ENCODE measurements at regions of chr1 and their contacts with region 1.

Region 1: GRCh38 chr1:38873027-38873969 is at the start of gene MYCBP:
- DNase-seq: peak; percentile 91 to 99 (median 97)

Region 2: DNA sequence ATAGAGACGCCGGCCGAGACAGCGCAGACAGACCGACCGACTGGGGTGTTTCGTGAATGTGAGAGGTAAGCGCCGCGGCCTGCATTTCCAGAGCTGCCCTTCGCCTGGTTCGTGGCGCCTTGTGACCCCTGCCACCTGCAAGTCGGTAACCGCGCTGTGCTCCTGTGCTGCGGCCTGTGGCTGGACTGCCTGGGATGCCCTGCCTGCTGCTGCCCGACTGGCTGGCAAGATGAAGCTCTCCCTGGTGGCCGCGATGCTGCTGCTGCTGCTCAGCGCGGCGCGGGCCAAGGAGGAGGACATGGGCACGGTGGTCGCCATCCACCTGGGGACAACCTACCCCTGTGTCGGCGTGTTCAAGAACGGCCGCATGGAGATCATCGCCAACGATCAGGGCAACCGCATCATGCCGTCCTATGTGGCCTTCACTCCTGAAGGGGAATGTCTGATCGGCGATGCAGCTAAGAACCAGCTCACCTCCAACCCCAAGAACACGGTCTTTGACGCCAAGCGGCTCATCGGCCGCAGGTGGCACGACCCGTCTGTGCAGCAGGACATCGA is 164.5 kb before region 1 on chr1:
- intact Hi-C with region 1: no loop called
- DNase-seq: no peak

Region 3: DNA sequence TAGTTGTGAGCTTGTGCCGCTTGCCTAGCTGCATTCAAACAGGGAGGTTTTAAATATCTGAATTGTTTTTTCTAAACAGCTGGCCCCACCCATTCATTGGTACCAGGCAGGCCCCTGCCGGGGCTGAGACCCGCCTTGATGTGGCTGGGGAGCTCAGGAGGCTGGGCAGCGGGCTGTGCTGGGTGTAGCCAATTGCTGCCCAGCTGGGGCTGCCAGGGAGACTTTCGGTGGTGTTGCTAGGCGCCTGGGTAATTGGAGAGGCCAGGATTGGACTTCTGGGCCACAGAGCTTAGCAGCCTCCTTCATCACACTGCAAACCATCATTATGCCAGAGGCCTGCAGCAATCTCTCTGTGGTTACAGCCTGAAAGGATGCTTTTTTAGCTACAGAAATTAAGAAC is 56.2 kb after region 1 on chr1:
- intact Hi-C with region 1: loop called (anchors 5 kb)
- DNase-seq: peak; percentile 72 to 95 (median 89)

Region 4: GRCh38 chr1:38990738-38991639 is 117.7 kb after region 1 on chr1 and contains the start of gene AKIRIN1:
- intact Hi-C with region 1: loop called (anchors 10 kb)
- DNase-seq: peak; percentile 91 to 100 (median 98)